Pancreas (tissue), 10 donors: ENCODE measurements at regions of chr9 and their contacts with region 1.

Region 1: GRCh38 chr9:2727966-2728613 is 10.8 kb downstream of the KCNV2 start:
- DNase-seq: peak in 2 of 6 donors; percentile 42 to 53
- ATAC-seq: peak; percentile 83 to 93 (median 92)
- H3K4me3 ChIP-seq: no peak overlapping the region
- H3K27ac ChIP-seq: no peak overlapping the region
- H3K4me1 ChIP-seq: peaks cover 0 to 12% (median 0%) of the 10 kb centered on the region in 3 donors
- H3K27me3 ChIP-seq: no peaks in the 10 kb centered on the region
- CTCF ChIP-seq: peak in 3 of 4 donors; percentile 30 to 41 (median 40)

Region 2: DNA sequence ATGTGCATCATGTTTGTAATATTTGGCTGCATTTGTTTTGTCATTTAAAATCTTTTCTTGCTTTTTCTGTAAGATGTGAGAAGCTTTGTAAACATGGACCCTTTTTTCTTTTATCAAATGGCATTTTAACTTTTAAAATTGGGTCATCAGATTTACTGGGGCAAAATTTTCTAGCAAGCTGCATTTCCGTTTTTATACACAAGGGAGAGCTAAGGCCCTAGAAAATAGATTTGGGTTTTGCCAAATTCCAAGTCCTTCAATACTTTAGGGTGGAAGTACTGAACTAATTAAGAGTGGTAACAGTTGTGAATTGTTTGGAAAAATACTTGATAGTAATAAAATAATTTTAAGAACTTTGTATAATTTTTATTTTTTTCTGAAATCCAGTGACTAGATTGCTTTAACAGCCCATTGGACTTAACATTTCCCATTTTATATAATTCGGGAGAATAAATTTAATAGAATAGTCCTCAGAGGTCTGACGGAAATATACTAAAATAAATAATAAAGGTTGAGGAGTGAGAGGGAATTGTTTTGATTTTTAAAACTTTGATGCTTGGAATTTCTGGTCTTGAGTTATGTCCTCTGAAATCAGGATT is 595.5 kb before region 1 on chr9:
- intact Hi-C with region 1: loop called in 1 of 3 experiments (anchors 10 kb)
- DNase-seq: no peak
- ATAC-seq: peak in 3 of 4 donors; percentile 65 to 78 (median 68)
- H3K4me3 ChIP-seq: no peak overlapping the region
- H3K27ac ChIP-seq: no peak overlapping the region
- H3K4me1 ChIP-seq: no peaks in the 10 kb centered on the region
- H3K27me3 ChIP-seq: no peaks in the 10 kb centered on the region
- CTCF ChIP-seq: peak in 3 of 4 donors; percentile 53 to 59 (median 59)

Region 3: GRCh38 chr9:2389404-2389803 is 338.7 kb before region 1 on chr9:
- intact Hi-C with region 1: no loop called
- DNase-seq: no peak
- ATAC-seq: no peak
- H3K4me3 ChIP-seq: no peak overlapping the region
- H3K27ac ChIP-seq: no peak overlapping the region
- H3K4me1 ChIP-seq: no peaks in the 10 kb centered on the region
- H3K27me3 ChIP-seq: no peaks in the 10 kb centered on the region
- CTCF ChIP-seq: no peak

Region 4: DNA sequence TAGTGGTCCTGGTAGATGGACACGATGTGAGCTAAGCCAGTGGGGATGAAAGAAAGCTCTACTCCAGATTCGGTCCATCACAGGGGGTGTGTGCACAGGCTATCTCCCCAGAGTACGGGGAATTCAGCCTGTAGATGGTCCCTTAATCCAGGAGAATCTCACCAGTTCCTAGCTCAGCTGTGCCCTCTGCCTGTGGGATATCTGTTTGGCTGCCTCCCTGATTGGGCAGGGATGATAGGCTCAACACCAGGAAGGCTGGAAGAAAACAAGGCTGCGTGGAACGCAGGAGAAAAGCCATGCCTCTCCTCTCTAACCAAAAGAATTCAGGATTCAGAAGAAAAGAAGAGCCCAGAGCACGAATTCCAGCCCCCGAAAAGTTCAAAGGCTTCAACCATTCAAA is 65.6 kb before region 1 on chr9:
- intact Hi-C with region 1: no loop called
- DNase-seq: peak in 3 of 6 donors; percentile 11 to 36 (median 16)
- ATAC-seq: peak; percentile 67 to 90 (median 70)
- H3K4me3 ChIP-seq: no peak overlapping the region
- H3K27ac ChIP-seq: no peak overlapping the region
- H3K4me1 ChIP-seq: no peaks in the 10 kb centered on the region
- H3K27me3 ChIP-seq: no peaks in the 10 kb centered on the region
- CTCF ChIP-seq: no peak